Endothelial cell of umbilical vein (primary cell): ENCODE measurements at regions of chr5 and their contacts with region 1.

Region 1: DNA sequence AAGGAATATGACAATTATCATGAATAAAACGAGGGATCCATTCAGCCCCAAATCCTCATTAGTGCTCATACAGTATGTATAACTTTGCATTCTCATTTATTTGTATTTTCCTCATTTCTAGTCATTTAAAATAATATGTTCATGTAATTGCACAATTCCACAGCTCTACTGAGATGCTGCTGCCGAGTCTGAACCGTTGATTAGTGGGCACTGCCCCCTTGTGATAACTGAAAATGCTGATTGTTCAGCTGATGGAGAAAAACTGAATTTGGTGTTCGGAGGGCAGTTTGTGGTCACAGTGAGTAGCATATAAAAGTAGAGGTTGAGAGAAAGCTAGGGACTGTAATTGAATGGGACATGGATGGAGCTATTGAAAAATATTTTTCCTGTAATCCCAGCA is 12.2 kb upstream of the GPR151 start:
- DNase-seq: peak; percentile 29
- H3K4me3 ChIP-seq: no peak overlapping the region
- H3K27ac ChIP-seq: no peak overlapping the region
- H3K4me1 ChIP-seq: no peaks in the 10 kb centered on the region
- H3K27me3 ChIP-seq: peaks cover 7 to 10% of the 10 kb centered on the region in 2 experiments
- CTCF ChIP-seq: peak; percentile 15 to 16
- POLR2A ChIP-seq: no peak

Region 2: DNA sequence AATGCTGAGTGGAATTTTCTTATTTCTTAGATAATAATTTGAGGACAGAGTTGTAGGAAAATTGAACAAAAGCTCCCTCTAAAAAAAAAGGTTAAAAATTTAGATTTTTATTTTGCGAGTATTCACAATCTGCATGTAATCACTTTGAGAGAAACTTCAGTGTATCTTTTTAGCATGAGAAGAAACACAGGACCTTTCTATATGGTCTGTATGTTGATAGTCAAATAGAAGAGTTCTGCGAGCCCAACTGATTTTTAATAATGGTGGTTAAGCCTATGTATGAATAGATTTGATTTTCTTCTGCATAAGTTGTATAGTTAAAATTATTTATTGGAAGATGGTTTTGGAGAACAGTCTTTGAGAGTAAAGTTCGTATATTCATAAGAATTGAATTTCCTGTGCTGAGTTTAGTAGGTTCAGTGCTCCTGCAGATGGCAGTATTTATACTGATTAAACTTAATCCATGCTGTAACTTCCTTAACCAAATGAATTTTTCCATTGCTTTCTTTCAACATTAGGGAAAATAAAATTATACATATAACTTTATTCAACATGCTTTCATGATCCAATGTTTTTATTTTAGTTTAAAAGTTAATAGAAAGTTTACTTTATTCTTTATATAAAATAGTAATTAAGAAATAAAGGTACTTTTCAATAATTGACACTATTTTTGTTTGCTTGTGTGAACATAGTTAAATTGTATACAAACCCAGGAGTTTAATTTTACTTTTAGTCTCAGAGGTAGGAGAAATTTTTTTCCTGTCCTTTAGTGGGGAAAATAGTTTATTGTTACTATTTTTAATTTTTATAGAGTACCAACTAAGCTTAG is 61.5 kb before region 1 on chr5:
- CTCF ChIA-PET with region 1: interaction called, 9 read pairs
- POLR2A ChIA-PET with region 1: no interaction called
- dilution Hi-C with region 1: no loop called
- intact Hi-C with region 1: loop called (anchors 1 kb)
- DNase-seq: peak; percentile 58
- H3K4me3 ChIP-seq: no peak overlapping the region
- H3K27ac ChIP-seq: no peak overlapping the region
- H3K4me1 ChIP-seq: peaks cover 10% of the 10 kb centered on the region
- H3K27me3 ChIP-seq: no peaks in the 10 kb centered on the region
- CTCF ChIP-seq: peak; percentile 21 to 32
- POLR2A ChIP-seq: no peak